Mammary epithelial cell (primary cell): ENCODE measurements at regions of chr1 and their contacts with region 1.

Region 1: GRCh38 chr1:104780470-104781078 is 1030.9 kb downstream of the AMY1C start:
- DNase-seq: peak; percentile 1
- H3K4me3 ChIP-seq: no peak overlapping the region
- H3K27ac ChIP-seq: no peak overlapping the region
- H3K4me1 ChIP-seq: no peaks in the 10 kb centered on the region
- H3K27me3 ChIP-seq: no peaks in the 10 kb centered on the region
- CTCF ChIP-seq: peak; percentile 60 to 76

Region 2: DNA sequence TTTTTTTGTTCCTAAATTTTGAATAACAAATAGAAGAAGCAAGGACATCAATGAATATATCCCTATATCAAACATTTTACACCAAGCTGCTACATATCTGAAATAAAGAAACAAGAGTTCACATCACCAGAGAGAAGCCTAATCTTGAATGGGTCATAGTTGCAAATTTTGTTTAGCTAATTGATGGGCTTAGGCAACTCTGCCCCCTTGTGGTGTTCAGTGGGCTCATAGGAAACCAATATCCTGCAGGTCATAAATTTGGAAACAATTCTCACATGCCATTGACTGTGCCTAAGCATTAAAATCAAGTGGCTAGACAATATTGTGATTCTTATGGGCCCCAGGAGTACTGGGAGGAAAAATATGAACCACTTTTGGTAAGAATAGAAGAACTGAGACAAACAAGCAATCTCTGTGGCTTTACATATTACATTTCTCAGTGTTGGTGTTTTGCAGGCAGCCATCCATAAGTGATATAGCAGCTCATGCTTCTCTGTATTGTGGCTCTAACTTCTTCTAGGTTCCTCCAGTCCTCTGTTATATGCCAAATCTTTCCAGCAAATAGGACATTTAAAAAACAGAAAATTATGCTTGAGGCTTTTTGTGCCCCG is 1013.1 kb after region 1 on chr1:
- CTCF ChIA-PET with region 1: interaction called, 4 read pairs
- dilution Hi-C with region 1: no loop called
- in situ Hi-C with region 1: loop called in 1 of 2 experiments (anchors 25 kb)
- intact Hi-C with region 1: no loop called
- DNase-seq: peak; percentile 1
- H3K4me3 ChIP-seq: no peak overlapping the region
- H3K27ac ChIP-seq: no peak overlapping the region
- H3K4me1 ChIP-seq: no peaks in the 10 kb centered on the region
- H3K27me3 ChIP-seq: no peaks in the 10 kb centered on the region
- CTCF ChIP-seq: peak; percentile 73 to 74